ENCODE measurements at regions of chr4 and their contacts with region 1.

Region 1: DNA sequence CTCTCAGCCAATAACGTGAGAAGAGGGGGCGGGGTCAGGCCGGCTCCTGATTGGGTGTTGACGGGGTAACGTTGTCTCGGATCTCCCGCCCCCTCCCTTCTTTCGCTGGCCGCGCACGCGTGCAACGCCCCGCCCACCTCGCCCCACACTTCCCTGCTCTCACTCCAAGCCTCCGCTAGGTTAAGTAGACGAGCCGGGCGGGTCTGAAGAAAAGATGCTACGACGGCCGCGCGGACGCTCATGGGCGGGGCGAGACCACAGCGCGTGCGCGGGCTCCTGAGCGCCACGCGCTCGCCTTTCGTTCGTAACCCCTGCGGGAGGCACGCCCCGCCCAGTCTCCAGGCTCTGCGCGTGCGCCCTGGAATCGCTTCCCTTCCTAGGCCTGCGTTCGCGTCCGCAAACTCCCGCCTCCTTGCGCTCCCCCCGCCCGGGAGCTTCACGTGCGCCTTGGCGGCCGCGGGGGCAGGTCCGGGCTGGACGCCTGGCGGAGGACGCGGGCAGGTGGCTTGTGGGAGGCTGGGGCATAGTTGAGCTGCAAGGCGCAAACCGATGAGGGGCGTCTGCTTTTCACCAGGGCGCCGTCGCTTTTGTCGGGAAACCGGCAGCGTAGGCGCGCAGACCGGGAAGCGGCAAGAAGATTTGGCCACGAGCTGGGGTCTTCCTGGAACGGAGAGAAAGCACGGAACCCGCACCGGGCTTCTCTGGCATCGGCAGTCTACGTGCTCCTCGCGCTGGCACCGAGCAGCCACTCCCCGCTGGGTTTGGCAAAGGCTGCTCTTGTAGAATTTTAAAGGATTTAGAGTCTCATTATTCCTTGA is 467 bp upstream of the PGRMC2 start:
- DNase-seq: peak; percentile 99
- H3K4me3 Mint-ChIP-seq: peak overlapping the region; percentile 77
- H3K27ac Mint-ChIP-seq: peak overlapping the region; percentile 83
- H3K4me1 Mint-ChIP-seq: peaks cover 24% of the 10 kb centered on the region
- H3K27me3 Mint-ChIP-seq: no peaks in the 10 kb centered on the region
- CTCF ChIP-seq: no peak

Region 2: DNA sequence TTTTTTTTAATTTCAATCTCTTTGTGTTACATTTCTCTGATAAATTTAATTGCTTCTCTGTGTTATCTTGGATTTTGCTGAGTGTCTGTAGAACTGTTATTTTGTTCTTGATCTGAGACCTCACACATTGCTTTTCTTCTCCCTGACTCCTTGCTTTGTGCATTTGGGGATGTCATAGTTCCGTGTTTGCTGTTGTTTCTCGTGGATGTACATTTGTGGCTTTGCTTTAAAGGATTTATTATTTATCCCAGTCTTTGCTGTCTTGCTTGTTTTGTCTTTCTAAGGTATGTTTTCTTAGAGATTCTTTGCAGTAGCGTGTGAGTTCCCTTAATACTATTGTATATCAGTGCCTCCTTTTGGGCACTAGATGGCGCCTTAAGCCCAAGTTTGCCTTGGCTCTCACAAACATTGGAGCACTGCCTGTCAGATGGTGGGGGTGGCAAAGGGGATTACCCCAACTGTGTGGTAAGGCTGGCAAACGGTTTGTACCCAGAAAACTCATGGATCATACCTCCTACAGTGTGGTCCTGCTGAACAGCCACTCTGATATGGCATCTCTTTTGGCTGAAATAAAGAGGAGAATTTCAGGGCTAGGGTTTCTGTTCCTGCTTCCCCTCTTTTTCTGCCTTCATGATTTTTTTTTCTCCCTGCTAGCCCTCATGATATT is 96.8 kb before region 1 on chr4:
- CTCF ChIA-PET with region 1: interaction called, 7 read pairs
- POLR2A ChIA-PET with region 1: no interaction called
- intact Hi-C with region 1: loop called (anchors 10 kb)
- DNase-seq: peak; percentile 81
- H3K4me3 Mint-ChIP-seq: no peak overlapping the region
- H3K27ac Mint-ChIP-seq: no peak overlapping the region
- H3K4me1 Mint-ChIP-seq: peaks cover 6% of the 10 kb centered on the region
- H3K27me3 Mint-ChIP-seq: no peaks in the 10 kb centered on the region
- CTCF ChIP-seq: peak; percentile 77

Region 3: DNA sequence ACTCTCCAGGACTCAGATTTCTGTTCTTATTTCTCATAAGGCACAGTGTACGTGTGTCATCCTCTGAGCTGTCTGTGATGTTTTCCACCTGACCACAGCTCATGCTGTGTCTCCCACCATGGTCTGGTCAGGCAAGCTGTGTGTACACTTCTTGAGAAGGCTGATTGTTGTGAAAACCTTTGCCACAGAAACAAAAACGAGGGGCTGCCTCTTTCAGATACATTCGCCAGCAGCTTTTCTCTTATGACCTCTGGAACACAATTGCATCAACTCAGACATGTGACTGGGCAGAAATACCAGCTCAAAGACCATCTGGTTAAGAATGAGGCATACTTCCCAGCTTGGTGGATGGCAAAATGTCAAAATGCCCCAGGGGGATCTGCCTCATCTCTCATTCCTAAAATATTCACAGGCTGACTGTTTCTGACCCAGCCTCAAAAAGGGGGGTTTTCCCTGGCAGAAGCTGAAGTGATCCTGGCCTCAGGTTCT is 46.6 kb before region 1 on chr4:
- CTCF ChIA-PET with region 1: interaction called, 3 read pairs
- POLR2A ChIA-PET with region 1: interaction called, 18 read pairs
- intact Hi-C with region 1: loop called (anchors 2 kb)
- DNase-seq: peak; percentile 96
- H3K4me3 Mint-ChIP-seq: peak overlapping the region; percentile 32
- H3K27ac Mint-ChIP-seq: peak overlapping the region; percentile 96
- H3K4me1 Mint-ChIP-seq: peaks cover 33% of the 10 kb centered on the region
- H3K27me3 Mint-ChIP-seq: no peaks in the 10 kb centered on the region
- CTCF ChIP-seq: no peak

Region 4: DNA sequence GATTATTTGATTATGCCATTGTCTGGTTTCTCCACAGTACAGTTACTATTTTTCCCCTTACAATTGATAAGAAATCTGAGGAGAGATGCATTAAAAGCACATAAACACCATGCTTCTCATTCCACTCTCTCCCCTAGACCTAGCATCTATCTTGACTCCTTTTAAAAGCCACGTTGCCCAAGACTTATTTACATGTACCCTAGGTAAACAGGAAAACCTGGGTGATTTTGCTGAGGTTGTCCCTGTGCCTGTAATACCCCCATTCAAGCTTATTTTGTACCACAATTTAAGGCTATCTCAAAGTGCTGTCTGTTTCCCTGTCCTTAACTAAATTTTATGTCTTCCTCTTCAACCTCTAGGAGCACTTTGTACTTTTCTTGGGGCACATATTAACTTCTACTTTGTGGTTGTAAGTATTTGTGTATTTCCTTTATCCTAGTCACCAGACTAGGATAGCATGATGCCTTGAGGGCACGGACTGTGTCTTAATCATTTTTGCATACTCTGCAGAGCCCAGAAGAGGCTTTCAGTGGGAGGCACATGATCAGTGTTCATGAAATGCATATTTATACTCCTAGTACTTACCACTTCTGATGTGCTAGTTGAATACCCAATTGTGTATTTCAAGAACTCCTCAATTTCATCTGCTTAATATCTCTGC is 27.5 kb after region 1 on chr4:
- CTCF ChIA-PET with region 1: interaction called, 3 read pairs
- POLR2A ChIA-PET with region 1: interaction called, 15 read pairs
- intact Hi-C with region 1: no loop called
- DNase-seq: peak; percentile 32
- H3K4me3 Mint-ChIP-seq: no peak overlapping the region
- H3K27ac Mint-ChIP-seq: peak overlapping the region; percentile 46
- H3K4me1 Mint-ChIP-seq: peaks cover 18% of the 10 kb centered on the region
- H3K27me3 Mint-ChIP-seq: no peaks in the 10 kb centered on the region
- CTCF ChIP-seq: no peak

Region 5: GRCh38 chr4:128364565-128364964 is 76.5 kb after region 1 on chr4:
- CTCF ChIA-PET with region 1: no interaction called
- POLR2A ChIA-PET with region 1: no interaction called
- intact Hi-C with region 1: no loop called
- DNase-seq: peak; percentile 30
- H3K4me3 Mint-ChIP-seq: no peak overlapping the region
- H3K27ac Mint-ChIP-seq: no peak overlapping the region
- H3K4me1 Mint-ChIP-seq: no peaks in the 10 kb centered on the region
- H3K27me3 Mint-ChIP-seq: no peaks in the 10 kb centered on the region
- CTCF ChIP-seq: no peak

Region 6: GRCh38 chr4:128386761-128387599 is 98.9 kb after region 1 on chr4:
- CTCF ChIA-PET with region 1: interaction called, 12 read pairs
- POLR2A ChIA-PET with region 1: interaction called, 115 read pairs
- intact Hi-C with region 1: loop called (anchors 2 kb)
- DNase-seq: peak; percentile 94
- H3K4me3 Mint-ChIP-seq: peak overlapping the region; percentile 52
- H3K27ac Mint-ChIP-seq: peak overlapping the region; percentile 84
- H3K4me1 Mint-ChIP-seq: peaks cover 45% of the 10 kb centered on the region
- H3K27me3 Mint-ChIP-seq: no peaks in the 10 kb centered on the region
- CTCF ChIP-seq: no peak

Region 7: GRCh38 chr4:128427832-128428366 is 139.8 kb after region 1 on chr4:
- CTCF ChIA-PET with region 1: interaction called, 7 read pairs
- POLR2A ChIA-PET with region 1: interaction called, 25 read pairs
- intact Hi-C with region 1: loop called (anchors 5 kb)
- DNase-seq: peak; percentile 88
- H3K4me3 Mint-ChIP-seq: peak overlapping the region; percentile 47
- H3K27ac Mint-ChIP-seq: no peak overlapping the region
- H3K4me1 Mint-ChIP-seq: peaks cover 22% of the 10 kb centered on the region
- H3K27me3 Mint-ChIP-seq: no peaks in the 10 kb centered on the region
- CTCF ChIP-seq: peak; percentile 42

Region 8: GRCh38 chr4:128809477-128810330 is 521.6 kb after region 1 on chr4 and contains the start of gene JADE1:
- CTCF ChIA-PET with region 1: interaction called, 4 read pairs
- POLR2A ChIA-PET with region 1: interaction called, 20 read pairs
- intact Hi-C with region 1: loop called (anchors 1 kb)
- DNase-seq: peak; percentile 96
- H3K4me3 Mint-ChIP-seq: peak within 1 kb of the TSS; percentile 93
- H3K27ac Mint-ChIP-seq: peak within 1 kb of the TSS; percentile 91
- H3K4me1 Mint-ChIP-seq: peaks cover 10% of the 10 kb centered on the region
- H3K27me3 Mint-ChIP-seq: no peaks in the 10 kb centered on the region
- CTCF ChIP-seq: peak; percentile 45
- total RNA-seq, gene JADE1: 22.7 and 25.9 TPM in 2 replicates

Region 9: DNA sequence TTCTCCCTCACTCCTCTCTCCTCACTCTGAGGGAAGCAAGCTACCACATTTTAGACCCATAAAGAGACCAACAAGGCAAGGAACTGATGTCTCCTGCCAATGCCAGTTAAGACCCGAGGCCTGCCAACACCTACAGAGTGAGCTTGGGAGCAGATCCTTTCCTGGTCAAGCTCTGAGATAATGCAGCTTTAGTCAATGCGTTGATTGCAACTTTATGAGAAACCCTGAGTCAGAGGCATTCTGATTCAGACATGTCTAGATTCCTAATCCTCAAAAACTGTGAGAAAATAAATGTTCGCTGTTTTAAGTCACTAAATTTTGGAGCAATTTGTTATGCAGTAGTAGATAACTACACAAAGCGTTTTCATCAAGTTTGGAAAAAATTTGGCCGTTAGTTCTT is 636.9 kb after region 1 on chr4:
- CTCF ChIA-PET with region 1: no interaction called
- POLR2A ChIA-PET with region 1: no interaction called
- intact Hi-C with region 1: no loop called
- DNase-seq: no peak
- H3K4me3 Mint-ChIP-seq: no peak overlapping the region
- H3K27ac Mint-ChIP-seq: no peak overlapping the region
- H3K4me1 Mint-ChIP-seq: no peaks in the 10 kb centered on the region
- H3K27me3 Mint-ChIP-seq: no peaks in the 10 kb centered on the region
- CTCF ChIP-seq: no peak